ENCODE measurements at regions of chr14 and their contacts with region 1.

Region 1: DNA sequence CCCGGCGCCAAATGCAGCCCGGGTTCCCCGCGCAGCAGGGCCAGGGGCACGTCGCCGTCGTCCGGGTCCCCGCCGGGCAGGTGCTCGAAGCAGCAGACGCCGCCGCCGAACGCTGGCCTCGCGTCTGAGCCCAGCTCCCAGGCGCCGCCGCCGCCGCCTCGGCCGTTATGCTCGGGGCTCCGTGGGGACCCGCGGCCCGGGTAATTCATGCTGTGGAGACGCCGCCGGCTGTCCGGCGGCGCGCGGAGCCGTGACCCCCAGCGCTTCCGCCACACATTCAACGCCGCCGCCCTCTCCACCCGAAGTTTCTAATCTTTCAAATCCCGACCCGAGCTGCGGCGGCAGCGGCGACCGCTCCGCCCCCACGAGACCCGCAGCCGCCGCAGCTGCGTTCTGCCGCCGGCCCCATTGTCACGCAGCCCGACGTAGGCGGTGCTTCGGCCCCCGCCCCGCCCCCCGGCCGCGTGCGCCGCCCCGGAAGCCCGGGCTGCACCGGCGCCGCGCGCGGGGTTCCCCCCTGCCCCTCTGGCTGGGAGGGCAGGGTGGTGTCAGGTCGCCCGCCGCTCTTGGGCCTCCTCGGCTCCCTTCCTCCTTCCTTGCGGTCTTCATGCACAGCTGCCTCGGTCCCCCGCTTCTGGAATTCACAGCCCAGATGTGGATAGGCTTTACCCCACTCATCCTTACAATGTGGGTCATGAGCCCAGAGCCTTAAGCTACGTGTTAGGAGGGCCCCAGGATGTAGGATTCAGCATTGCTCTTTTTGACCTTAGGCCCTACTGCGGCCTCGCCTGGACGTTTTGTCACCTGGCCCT is at the start of gene DDHD1:
- DNase-seq: peak; percentile 51
- ATAC-seq: peak; percentile 81
- H3K4me3 ChIP-seq: peak within 1 kb of the TSS; percentile 94
- H3K27ac ChIP-seq: peak within 1 kb of the TSS; percentile 90
- H3K4me1 ChIP-seq: peaks cover 9% of the 10 kb centered on the region
- H3K27me3 ChIP-seq: no peaks in the 10 kb centered on the region
- CTCF ChIP-seq: no peak
- EP300 ChIP-seq: 0 out of 4 replicates have a peak, but pooled peaks of 1 of the 2 experiments have one; percentile 44
- POLR2A ChIP-seq: peak; percentile 85
- RAD21 ChIP-seq: no peak
- polyA plus RNA-seq, gene DDHD1: 7.7 to 10.0 TPM

Region 2: DNA sequence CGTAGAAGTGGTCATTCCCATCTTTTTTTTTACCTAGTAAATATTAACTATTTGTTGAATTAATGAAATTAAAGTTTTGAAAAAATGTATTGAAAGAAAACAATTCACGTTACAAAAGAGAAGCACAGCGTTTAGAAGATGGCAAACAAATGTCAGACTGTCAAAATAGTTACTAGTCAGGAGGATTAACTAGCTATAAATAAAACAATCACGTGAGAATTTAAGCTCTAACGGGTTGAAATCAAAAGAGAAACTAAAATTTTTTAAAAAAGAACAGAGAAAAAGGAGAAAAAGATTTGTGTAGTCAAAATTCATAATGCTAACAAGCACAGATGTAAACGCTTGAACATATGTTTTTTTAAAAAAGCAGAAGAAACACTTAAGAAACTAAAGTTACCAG is 26.4 kb before region 1 on chr14:
- CTCF ChIA-PET with region 1: interaction called, 3 read pairs
- POLR2A ChIA-PET with region 1: interaction called, 4 read pairs
- RAD21 ChIA-PET with region 1: interaction called, 6 read pairs
- SMC1A ChIA-PET with region 1: interaction called, 13 read pairs
- in situ Hi-C with region 1: no loop called
- intact Hi-C with region 1: no loop called
- DNase-seq: no peak
- ATAC-seq: peak; percentile 45
- H3K4me3 ChIP-seq: peak overlapping the region; percentile 20
- H3K27ac ChIP-seq: peak overlapping the region; percentile 71
- H3K4me1 ChIP-seq: peaks cover 4% of the 10 kb centered on the region
- H3K27me3 ChIP-seq: no peaks in the 10 kb centered on the region
- CTCF ChIP-seq: no peak
- EP300 ChIP-seq: no peak
- POLR2A ChIP-seq: no peak
- RAD21 ChIP-seq: no peak

Region 3: DNA sequence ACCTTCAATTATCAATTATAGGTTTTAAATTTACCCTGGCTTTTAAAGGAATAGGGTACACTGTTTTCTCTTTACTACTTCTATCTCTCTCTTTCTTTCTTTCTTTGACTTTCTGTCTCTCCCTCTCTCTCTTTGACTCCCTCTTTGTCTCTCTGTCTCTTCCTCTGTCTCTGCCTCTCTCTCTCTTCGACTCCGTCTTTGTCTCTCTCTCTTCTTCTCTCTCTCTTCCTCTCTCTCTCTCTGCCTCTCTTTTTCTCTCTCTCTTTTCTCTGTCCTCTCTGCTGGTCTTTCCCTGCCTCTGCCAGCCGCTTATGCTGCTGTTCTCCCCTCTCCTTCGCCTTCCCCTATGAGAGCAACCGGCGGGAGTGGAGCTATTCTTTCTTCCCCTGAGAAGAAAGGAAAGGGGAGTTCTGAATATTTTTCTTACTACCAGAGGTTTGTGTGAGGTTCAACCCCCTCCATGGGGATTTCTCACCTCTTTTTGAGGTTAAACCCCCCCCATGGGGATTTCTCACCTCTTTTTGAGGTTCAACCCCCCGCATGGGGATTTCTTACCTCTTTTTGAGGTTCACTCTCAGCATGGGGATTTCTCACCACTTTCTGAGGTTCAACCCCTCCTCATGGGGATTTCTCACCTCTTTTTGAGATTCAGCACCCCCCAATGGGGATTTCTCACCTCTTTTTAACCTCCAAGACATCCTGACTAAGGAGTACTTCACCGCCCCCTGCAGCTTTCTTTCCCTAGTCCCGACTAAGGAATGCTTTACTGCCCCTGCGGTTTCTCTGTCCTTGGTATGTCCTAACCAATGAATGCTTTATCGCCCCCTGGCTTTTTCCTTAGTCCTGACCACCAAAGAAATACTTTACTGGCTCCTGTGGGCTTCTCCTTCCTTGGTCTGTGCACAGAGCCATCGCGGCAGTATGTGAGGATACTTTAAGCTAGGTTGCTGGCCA is 27.4 kb after region 1 on chr14:
- CTCF ChIA-PET with region 1: interaction called, 8 read pairs
- POLR2A ChIA-PET with region 1: interaction called, 7 read pairs
- RAD21 ChIA-PET with region 1: interaction called, 14 read pairs
- SMC1A ChIA-PET with region 1: interaction called, 5 read pairs
- in situ Hi-C with region 1: no loop called
- intact Hi-C with region 1: loop called (anchors 2 kb)
- DNase-seq: peak; percentile 78
- ATAC-seq: peak; percentile 92
- H3K4me3 ChIP-seq: no peak overlapping the region
- H3K27ac ChIP-seq: peak overlapping the region; percentile 39; the same call in 1 of the 2 replicates
- H3K4me1 ChIP-seq: peaks cover 11% of the 10 kb centered on the region
- H3K27me3 ChIP-seq: no peaks in the 10 kb centered on the region
- CTCF ChIP-seq: peak; percentile 11 to 56 (median 26); a peak in 3 of 6 replicates
- EP300 ChIP-seq: peak in 1 of 2 experiments; percentile 78; a peak in 3 of 4 replicates
- POLR2A ChIP-seq: no peak
- RAD21 ChIP-seq: peak; percentile 53